ENCODE measurements at regions of chr22 and their contacts with region 1.

Region 1: GRCh38 chr22:22848364-22848866 is 39.2 kb upstream of the IGLL5 start:
- DNase-seq: peak; percentile 52 to 72 (median 57)
- H3K4me3 ChIP-seq: no peak overlapping the region
- H3K4me3 Mint-ChIP-seq: peak overlapping the region in 4 of 8 donors; percentile 32 to 49 (median 40)
- H3K27ac ChIP-seq: no peak overlapping the region
- H3K27ac Mint-ChIP-seq: peak overlapping the region in 5 of 7 donors; percentile 42 to 70 (median 61)
- H3K4me1 ChIP-seq: peaks cover 12% of the 10 kb centered on the region
- H3K4me1 Mint-ChIP-seq: peaks cover 31 to 55% (median 45%) of the 10 kb centered on the region in 4 donors
- H3K27me3 ChIP-seq: no peaks in the 10 kb centered on the region
- H3K27me3 Mint-ChIP-seq: peaks cover 0 to 1% of the 10 kb centered on the region in 2 donors

Region 2: GRCh38 chr22:22770280-22770871 is 78.0 kb before region 1 on chr22:
- CTCF ChIA-PET with region 1: interaction called, 12 read pairs
- POLR2A ChIA-PET with region 1: interaction called, 4 read pairs
- intact Hi-C with region 1: no loop called
- DNase-seq: peak; percentile 20 to 46 (median 30)
- H3K4me3 ChIP-seq: no peak overlapping the region
- H3K4me3 Mint-ChIP-seq: no peak overlapping the region
- H3K27ac ChIP-seq: no peak overlapping the region
- H3K27ac Mint-ChIP-seq: peak overlapping the region in 5 of 7 donors; percentile 2 to 72 (median 23)
- H3K4me1 ChIP-seq: no peaks in the 10 kb centered on the region
- H3K4me1 Mint-ChIP-seq: peaks cover 10 to 28% (median 19%) of the 10 kb centered on the region in 4 donors
- H3K27me3 ChIP-seq: no peaks in the 10 kb centered on the region
- H3K27me3 Mint-ChIP-seq: peaks cover 3 to 4% of the 10 kb centered on the region in 2 donors

Region 3: DNA sequence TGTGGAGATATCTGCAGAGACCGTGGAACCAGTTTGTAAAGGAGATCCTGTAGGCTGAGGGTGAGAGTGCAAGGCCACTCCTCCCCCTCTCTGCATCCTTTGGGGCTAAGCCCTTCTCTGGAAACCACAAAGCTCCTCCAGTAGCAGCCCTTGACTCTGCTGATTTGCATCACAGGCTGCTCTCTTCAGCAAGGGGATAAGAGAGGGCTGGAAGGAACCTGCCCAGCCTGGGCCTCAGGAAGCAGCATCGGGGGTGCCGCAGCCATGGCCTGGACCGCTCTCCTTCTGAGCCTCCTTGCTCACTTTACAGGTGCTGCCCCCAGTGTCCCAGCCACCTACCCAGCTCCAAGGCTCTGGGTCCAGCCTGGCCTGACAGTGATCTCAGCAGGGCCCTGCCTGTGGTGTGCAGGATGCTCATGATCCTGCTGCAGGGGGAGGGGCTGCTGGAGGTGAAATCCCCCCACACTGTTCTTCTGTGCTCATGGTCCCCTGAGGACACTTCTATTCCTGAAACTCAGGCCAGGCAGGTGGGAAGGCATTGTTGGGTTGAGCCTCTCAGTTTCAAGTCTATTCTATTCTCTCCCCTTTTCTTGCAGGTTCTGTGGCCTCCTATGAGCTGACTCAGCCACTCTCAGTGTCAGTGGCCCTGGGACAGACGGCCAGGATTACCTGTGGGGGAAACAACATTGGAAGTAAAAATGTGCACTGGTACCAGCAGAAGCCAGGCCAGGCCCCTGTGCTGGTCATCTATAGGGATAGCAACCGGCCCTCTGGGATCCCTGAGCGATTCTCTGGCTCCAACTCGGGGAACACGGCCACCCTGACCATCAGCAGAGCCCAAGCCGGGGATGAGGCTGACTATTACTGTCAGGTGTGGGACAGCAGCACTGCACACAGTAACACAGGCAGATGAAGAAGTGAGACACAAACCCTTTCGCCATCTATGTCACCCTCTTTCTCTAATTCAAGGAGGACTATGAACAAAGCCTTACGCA is 29.3 kb before region 1 on chr22:
- CTCF ChIA-PET with region 1: interaction called, 560 read pairs
- POLR2A ChIA-PET with region 1: interaction called, 250 read pairs
- intact Hi-C with region 1: loop called (anchors 2 kb)
- DNase-seq: peak; percentile 56 to 59 (median 58)
- H3K4me3 ChIP-seq: peak overlapping the region in 1 of 2 donors; percentile 62
- H3K4me3 Mint-ChIP-seq: peak overlapping the region; percentile 76 to 91 (median 81)
- H3K27ac ChIP-seq: peak overlapping the region; percentile 58
- H3K27ac Mint-ChIP-seq: peak overlapping the region; percentile 88 to 97 (median 96)
- H3K4me1 ChIP-seq: peaks cover 96% of the 10 kb centered on the region
- H3K4me1 Mint-ChIP-seq: peaks cover 84 to 99% (median 94%) of the 10 kb centered on the region in 4 donors
- H3K27me3 ChIP-seq: no peaks in the 10 kb centered on the region
- H3K27me3 Mint-ChIP-seq: no peaks in the 10 kb centered on the region

Region 4: GRCh38 chr22:22836635-22837034 is 11.8 kb before region 1 on chr22:
- CTCF ChIA-PET with region 1: interaction called, 47 read pairs
- POLR2A ChIA-PET with region 1: interaction called, 4 read pairs
- intact Hi-C with region 1: no loop called
- DNase-seq: no peak
- H3K4me3 ChIP-seq: no peak overlapping the region
- H3K4me3 Mint-ChIP-seq: no peak overlapping the region
- H3K27ac ChIP-seq: no peak overlapping the region
- H3K27ac Mint-ChIP-seq: no peak overlapping the region
- H3K4me1 ChIP-seq: peaks cover 13% of the 10 kb centered on the region
- H3K4me1 Mint-ChIP-seq: peaks cover 14 to 29% (median 21%) of the 10 kb centered on the region in 4 donors
- H3K27me3 ChIP-seq: no peaks in the 10 kb centered on the region
- H3K27me3 Mint-ChIP-seq: no peaks in the 10 kb centered on the region

Region 5: DNA sequence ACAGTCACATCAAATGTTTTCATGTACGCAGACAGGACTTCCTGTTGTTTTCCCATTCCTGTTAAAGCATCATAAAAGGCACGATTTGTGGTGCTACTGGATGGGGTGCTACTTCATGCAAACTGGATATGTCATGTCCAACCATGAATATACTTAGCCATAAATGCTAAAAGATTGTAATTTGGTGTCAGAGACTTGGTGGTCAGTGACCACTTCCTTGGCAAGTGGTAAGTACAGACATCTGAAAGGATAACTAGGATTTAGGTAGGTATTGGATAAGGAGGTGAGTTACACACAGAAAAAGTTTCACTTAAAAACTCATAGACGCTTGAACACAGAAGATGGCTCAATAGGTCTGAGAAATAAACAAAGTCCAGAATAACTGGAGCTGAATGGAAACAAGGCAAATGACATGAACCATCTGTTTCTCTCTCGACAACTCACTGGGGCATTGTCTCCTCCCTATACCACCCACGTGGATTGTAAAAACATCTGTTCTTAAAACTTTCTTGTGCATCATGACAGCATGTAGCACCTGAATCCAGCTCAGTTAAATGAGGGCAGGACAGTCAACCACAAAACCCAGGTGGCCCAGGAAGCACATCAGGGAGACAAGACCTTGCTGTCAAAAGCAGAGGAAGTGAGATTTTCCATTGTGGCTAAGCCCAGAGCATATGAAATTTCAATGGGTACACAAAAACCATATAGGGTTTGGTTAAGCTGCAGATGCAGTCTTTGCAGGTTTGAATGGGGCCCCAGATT is 17.1 kb after region 1 on chr22:
- CTCF ChIA-PET with region 1: interaction called, 48 read pairs
- POLR2A ChIA-PET with region 1: interaction called, 16 read pairs
- intact Hi-C with region 1: no loop called
- DNase-seq: peak; percentile 53 to 71 (median 59)
- H3K4me3 ChIP-seq: no peak overlapping the region
- H3K4me3 Mint-ChIP-seq: peak overlapping the region in 7 of 8 donors; percentile 33 to 67 (median 51)
- H3K27ac ChIP-seq: no peak overlapping the region
- H3K27ac Mint-ChIP-seq: peak overlapping the region; percentile 50 to 95 (median 83)
- H3K4me1 ChIP-seq: peaks cover 35% of the 10 kb centered on the region
- H3K4me1 Mint-ChIP-seq: peaks cover 35 to 55% (median 41%) of the 10 kb centered on the region in 4 donors
- H3K27me3 ChIP-seq: no peaks in the 10 kb centered on the region
- H3K27me3 Mint-ChIP-seq: no peaks in the 10 kb centered on the region

Region 6: GRCh38 chr22:22870577-22871404 is 22.4 kb after region 1 on chr22:
- CTCF ChIA-PET with region 1: interaction called, 48 read pairs
- POLR2A ChIA-PET with region 1: interaction called, 16 read pairs
- intact Hi-C with region 1: no loop called
- DNase-seq: no peak
- H3K4me3 ChIP-seq: no peak overlapping the region
- H3K4me3 Mint-ChIP-seq: no peak overlapping the region
- H3K27ac ChIP-seq: no peak overlapping the region
- H3K27ac Mint-ChIP-seq: peak overlapping the region in 3 of 7 donors; percentile 29 to 72 (median 63)
- H3K4me1 ChIP-seq: peaks cover 13% of the 10 kb centered on the region
- H3K4me1 Mint-ChIP-seq: peaks cover 12 to 29% (median 15%) of the 10 kb centered on the region in 4 donors
- H3K27me3 ChIP-seq: no peaks in the 10 kb centered on the region
- H3K27me3 Mint-ChIP-seq: no peaks in the 10 kb centered on the region

Region 7: DNA sequence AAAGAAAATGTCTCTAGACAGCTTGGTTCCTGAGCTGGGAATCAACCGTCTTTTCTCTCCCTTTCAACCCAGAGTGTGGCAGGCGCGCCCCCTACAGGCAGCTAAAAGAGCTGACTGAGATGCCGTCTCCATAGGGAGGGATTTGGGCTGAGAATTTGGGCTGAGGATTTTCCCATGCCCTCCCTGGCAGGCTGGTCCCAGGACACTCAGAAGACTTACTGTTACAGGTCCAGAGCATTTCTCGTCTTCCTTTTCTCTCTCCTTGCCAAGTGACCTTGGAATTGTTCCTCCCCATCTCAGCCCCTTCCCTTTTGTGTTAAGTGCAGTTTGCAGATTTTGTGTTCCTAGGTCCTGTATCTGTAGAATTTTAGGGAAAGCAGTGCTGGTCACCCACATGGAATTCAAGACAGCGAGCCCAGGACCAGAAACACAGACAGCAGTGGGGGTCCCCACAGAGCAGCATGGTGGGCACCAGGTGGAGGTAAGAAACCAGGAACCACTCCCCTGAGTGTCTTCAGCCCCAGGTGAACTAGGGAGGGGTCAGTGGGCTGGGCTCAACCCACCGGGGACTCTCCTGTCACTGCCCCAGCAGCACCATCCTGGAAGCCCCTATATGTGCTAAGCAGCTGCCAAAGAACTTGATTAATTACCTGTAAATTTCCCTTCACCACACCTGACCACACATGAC is 29.3 kb after region 1 on chr22:
- CTCF ChIA-PET with region 1: interaction called, 47 read pairs
- POLR2A ChIA-PET with region 1: interaction called, 5 read pairs
- intact Hi-C with region 1: loop called (anchors 1 kb)
- DNase-seq: peak; percentile 72 to 74 (median 73)
- H3K4me3 ChIP-seq: no peak overlapping the region
- H3K4me3 Mint-ChIP-seq: no peak overlapping the region
- H3K27ac ChIP-seq: no peak overlapping the region
- H3K27ac Mint-ChIP-seq: peak overlapping the region in 2 of 7 donors; percentile 42 to 76
- H3K4me1 ChIP-seq: no peaks in the 10 kb centered on the region
- H3K4me1 Mint-ChIP-seq: peaks cover 0 to 5% (median 2%) of the 10 kb centered on the region in 4 donors
- H3K27me3 ChIP-seq: no peaks in the 10 kb centered on the region
- H3K27me3 Mint-ChIP-seq: no peaks in the 10 kb centered on the region